ENCODE measurements at regions of chr12 and their contacts with region 1.

Region 1: DNA sequence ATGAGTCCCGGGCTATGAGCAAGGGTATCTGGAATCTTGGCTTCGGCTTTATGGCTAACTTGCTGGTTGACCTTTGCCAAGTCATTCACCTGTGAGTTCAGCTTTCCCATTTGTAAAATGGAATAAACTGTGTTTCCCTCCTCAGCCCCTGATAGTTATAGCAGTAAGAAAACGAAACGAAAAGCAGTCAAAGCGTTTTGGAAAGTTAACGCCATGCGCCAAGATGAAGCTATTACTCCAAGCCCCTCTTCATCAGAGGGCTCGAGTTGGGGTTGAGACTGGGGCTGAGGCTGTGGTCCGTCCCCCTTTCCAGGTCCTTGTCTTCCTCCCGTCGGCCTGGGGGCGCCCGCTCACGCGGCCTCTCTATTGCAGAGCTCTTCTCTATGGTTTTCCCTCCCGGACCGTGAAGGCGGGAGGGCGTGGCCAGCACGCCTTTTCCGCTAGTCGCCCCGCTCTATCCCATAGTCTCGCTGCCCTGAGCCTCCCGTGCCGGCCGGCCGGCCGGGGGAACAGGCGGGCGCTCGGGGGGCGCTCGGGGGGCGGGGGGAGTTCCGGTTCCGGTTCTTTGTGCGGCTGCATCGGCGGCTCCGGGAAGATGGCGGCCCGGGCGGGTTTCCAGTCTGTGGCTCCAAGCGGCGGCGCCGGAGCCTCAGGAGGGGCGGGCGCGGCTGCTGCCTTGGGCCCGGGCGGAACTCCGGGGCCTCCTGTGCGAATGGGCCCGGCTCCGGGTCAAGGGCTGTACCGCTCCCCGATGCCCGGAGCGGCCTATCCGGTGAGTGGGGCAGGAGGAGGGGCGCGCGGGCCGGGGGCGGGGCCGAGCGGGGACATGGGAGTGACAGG is at the start of gene SMARCD1:
- DNase-seq: peak; percentile 65 to 85 (median 76)
- ATAC-seq: peak; percentile 92
- H3K4me3 ChIP-seq: peak within 1 kb of the TSS; percentile 82
- H3K4me3 Mint-ChIP-seq: peak within 1 kb of the TSS; percentile 87 to 98 (median 94)
- H3K27ac ChIP-seq: peak within 1 kb of the TSS; percentile 98
- H3K27ac Mint-ChIP-seq: peak within 1 kb of the TSS; percentile 93 to 99 (median 96)
- H3K4me1 ChIP-seq: peaks cover 0 to 5% of the 10 kb centered on the region in 2 donors
- H3K4me1 Mint-ChIP-seq: peaks cover 6 to 46% (median 40%) of the 10 kb centered on the region in 7 donors
- H3K27me3 ChIP-seq: no peaks in the 10 kb centered on the region
- H3K27me3 Mint-ChIP-seq: no peaks in the 10 kb centered on the region
- total RNA-seq, gene SMARCD1: 65.1 to 88.5 (median 67.5) TPM

Region 2: GRCh38 chr12:50055831-50056638 is 29.0 kb before region 1 on chr12:
- CTCF ChIA-PET with region 1: interaction called, 5 read pairs
- POLR2A ChIA-PET with region 1: no interaction called
- intact Hi-C with region 1: loop called in 1 of 2 experiments (anchors 1 kb)
- DNase-seq: peak; percentile 41 to 64 (median 56)
- ATAC-seq: peak; percentile 79
- H3K4me3 ChIP-seq: peak overlapping the region; percentile 42
- H3K4me3 Mint-ChIP-seq: peak overlapping the region; percentile 66 to 96 (median 92)
- H3K27ac ChIP-seq: no peak overlapping the region
- H3K27ac Mint-ChIP-seq: peak overlapping the region in 2 of 9 donors; percentile 46 to 57
- H3K4me1 ChIP-seq: peaks cover 7 to 31% of the 10 kb centered on the region in 2 donors
- H3K4me1 Mint-ChIP-seq: peaks cover 17 to 48% (median 41%) of the 10 kb centered on the region in 7 donors
- H3K27me3 ChIP-seq: peaks cover 0 to 9% of the 10 kb centered on the region in 2 donors
- H3K27me3 Mint-ChIP-seq: peaks cover 38 to 56% (median 48%) of the 10 kb centered on the region in 5 donors

Region 3: DNA sequence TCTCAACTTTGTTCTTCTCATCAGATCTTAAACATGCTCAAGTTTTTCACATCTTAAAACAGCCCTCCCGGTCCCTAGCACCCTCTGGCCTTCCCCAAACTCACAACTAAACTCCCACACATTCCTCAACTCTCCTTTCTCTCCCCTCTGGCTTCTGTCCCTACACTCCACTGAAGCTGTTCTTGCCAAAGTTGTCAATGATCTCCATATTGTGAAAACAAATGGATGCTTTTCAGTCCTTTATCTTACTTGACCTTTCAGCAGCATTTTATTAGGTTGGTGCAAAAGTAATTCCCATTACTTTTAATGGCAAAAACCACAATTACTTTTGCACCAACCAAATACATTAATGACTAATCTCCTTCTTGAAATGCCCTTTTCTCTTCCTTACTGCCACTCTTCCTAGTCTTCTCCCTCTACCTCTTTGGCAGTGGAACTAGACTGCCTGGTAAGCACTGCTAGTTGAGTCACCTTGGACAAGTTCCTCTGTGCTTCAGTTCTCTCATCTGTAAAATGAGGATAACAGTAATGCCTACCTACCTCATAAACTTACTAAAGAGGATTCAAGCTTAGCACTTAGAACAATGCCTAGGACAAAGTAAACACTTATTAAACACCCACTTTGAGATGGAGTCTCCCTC is 66.2 kb after region 1 on chr12:
- CTCF ChIA-PET with region 1: no interaction called
- POLR2A ChIA-PET with region 1: no interaction called
- intact Hi-C with region 1: no loop called
- DNase-seq: no peak
- ATAC-seq: no peak
- H3K4me3 ChIP-seq: no peak overlapping the region
- H3K4me3 Mint-ChIP-seq: no peak overlapping the region
- H3K27ac ChIP-seq: no peak overlapping the region
- H3K27ac Mint-ChIP-seq: peak overlapping the region in 7 of 9 donors; percentile 2 to 60 (median 14)
- H3K4me1 ChIP-seq: no peaks in the 10 kb centered on the region
- H3K4me1 Mint-ChIP-seq: peaks cover 3 to 26% (median 18%) of the 10 kb centered on the region in 7 donors
- H3K27me3 ChIP-seq: no peaks in the 10 kb centered on the region
- H3K27me3 Mint-ChIP-seq: no peaks in the 10 kb centered on the region

Region 4: GRCh38 chr12:50174971-50175715 is 90.1 kb after region 1 on chr12:
- CTCF ChIA-PET with region 1: interaction called, 20 read pairs
- POLR2A ChIA-PET with region 1: interaction called, 8 read pairs
- intact Hi-C with region 1: loop called (anchors 1 kb)
- DNase-seq: peak in 7 of 9 donors; percentile 25 to 67 (median 56)
- ATAC-seq: peak; percentile 63
- H3K4me3 ChIP-seq: no peak overlapping the region
- H3K4me3 Mint-ChIP-seq: no peak overlapping the region
- H3K27ac ChIP-seq: no peak overlapping the region
- H3K27ac Mint-ChIP-seq: peak overlapping the region in 5 of 9 donors; percentile 3 to 71 (median 32)
- H3K4me1 ChIP-seq: no peaks in the 10 kb centered on the region
- H3K4me1 Mint-ChIP-seq: peaks cover 0 to 5% (median 0%) of the 10 kb centered on the region in 7 donors
- H3K27me3 ChIP-seq: no peaks in the 10 kb centered on the region
- H3K27me3 Mint-ChIP-seq: no peaks in the 10 kb centered on the region

Region 5: GRCh38 chr12:50283229-50283923 is 198.4 kb after region 1 on chr12 and contains the start of gene LIMA1:
- CTCF ChIA-PET with region 1: no interaction called
- POLR2A ChIA-PET with region 1: interaction called, 3 read pairs
- intact Hi-C with region 1: loop called in 1 of 2 experiments (anchors 1 kb)
- DNase-seq: peak; percentile 91 to 97 (median 94)
- ATAC-seq: peak; percentile 100
- H3K4me3 ChIP-seq: peak within 1 kb of the TSS; percentile 80
- H3K4me3 Mint-ChIP-seq: peak within 1 kb of the TSS; percentile 87 to 98 (median 94)
- H3K27ac ChIP-seq: peak within 1 kb of the TSS; percentile 90
- H3K27ac Mint-ChIP-seq: peak within 1 kb of the TSS; percentile 80 to 95 (median 88)
- H3K4me1 ChIP-seq: peaks cover 11 to 15% of the 10 kb centered on the region in 2 donors
- H3K4me1 Mint-ChIP-seq: peaks cover 8 to 32% (median 23%) of the 10 kb centered on the region in 7 donors
- H3K27me3 ChIP-seq: no peaks in the 10 kb centered on the region
- H3K27me3 Mint-ChIP-seq: peaks cover 0 to 27% (median 0%) of the 10 kb centered on the region in 5 donors
- total RNA-seq, gene LIMA1: 9.8 to 33.6 (median 11.2) TPM

Region 6: GRCh38 chr12:52050761-52051541 is 1966.0 kb after region 1 on chr12 and contains the start of gene NR4A1:
- CTCF ChIA-PET with region 1: no interaction called
- POLR2A ChIA-PET with region 1: no interaction called
- intact Hi-C with region 1: loop called in 1 of 2 experiments (anchors 10 kb)
- DNase-seq: peak; percentile 98 to 100 (median 99)
- ATAC-seq: peak; percentile 96
- H3K4me3 ChIP-seq: peak within 1 kb of the TSS; percentile 71
- H3K4me3 Mint-ChIP-seq: peak within 1 kb of the TSS; percentile 90 to 98 (median 94)
- H3K27ac ChIP-seq: peak within 1 kb of the TSS; percentile 93
- H3K27ac Mint-ChIP-seq: peak within 1 kb of the TSS; percentile 59 to 100 (median 99)
- H3K4me1 ChIP-seq: peaks cover 21 to 22% of the 10 kb centered on the region in 2 donors
- H3K4me1 Mint-ChIP-seq: peaks cover 23 to 41% (median 37%) of the 10 kb centered on the region in 7 donors
- H3K27me3 ChIP-seq: no peaks in the 10 kb centered on the region
- H3K27me3 Mint-ChIP-seq: peaks cover 0 to 9% (median 0%) of the 10 kb centered on the region in 5 donors
- total RNA-seq, gene NR4A1: 0.89 to 279 (median 7.1) TPM

Measured in naive thymus-derived CD4-positive, alpha-beta T cell (primary cell).